ENCODE measurements at regions of chr1 and their contacts with region 1.

Region 1: DNA sequence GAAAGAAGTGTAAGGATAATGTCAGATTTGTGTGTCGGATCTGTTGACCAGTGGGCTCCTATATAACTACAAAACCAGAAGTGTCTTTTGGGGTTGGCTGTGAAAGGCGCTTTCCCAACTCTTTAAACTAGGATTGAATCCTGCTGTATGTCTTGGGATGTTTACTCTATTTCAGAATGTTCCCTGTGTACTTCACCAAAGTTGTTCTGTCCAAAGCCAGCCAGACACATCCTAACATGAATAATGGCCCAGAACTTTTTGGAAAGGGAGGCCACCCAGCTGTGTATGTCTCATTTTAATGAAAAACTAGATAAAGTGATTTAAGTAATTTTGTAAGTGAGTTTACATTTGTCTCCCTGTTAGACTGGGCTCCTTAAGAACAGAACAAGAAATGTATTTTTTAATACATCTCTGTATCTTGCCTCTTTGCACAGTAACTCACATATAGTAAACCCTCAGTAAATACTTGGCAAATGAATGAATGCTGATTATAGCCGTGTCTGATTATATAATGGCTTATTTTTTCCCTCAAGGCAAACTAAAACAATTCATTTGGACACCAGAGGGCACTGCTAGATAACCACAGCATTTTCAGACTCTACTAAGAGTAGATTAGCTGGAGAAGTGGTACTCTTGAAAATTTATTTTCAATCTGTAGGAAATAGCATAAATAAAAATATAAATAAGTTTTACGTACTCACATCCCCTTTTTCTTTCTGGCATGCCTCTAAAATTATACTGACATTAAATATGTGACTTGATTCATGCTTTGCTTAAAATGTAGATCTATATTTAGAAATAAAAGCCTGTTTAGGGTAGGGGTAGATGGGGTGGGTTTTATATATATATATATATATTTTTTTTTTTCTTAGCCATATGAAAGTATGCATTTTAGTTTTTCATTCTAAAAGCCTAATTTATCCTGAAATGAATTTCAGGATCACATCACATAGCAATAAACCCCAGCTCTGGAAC is 23.8 kb downstream of the TSEN15 start:
- DNase-seq: no peak
- H3K4me3 ChIP-seq: no peak overlapping the region
- H3K27me3 ChIP-seq: no peaks in the 10 kb centered on the region
- CTCF ChIP-seq: peak; percentile 60

Region 2: GRCh38 chr1:184222652-184223052 is 147.3 kb after region 1 on chr1:
- CTCF ChIA-PET with region 1: interaction called, 49 read pairs
- POLR2A ChIA-PET with region 1: no interaction called
- DNase-seq: no peak
- H3K4me3 ChIP-seq: no peak overlapping the region
- H3K27me3 ChIP-seq: no peaks in the 10 kb centered on the region
- CTCF ChIP-seq: peak; percentile 95